Caco-2 (cell line): ENCODE measurements at regions of chr7 and their contacts with region 1.

Region 1: DNA sequence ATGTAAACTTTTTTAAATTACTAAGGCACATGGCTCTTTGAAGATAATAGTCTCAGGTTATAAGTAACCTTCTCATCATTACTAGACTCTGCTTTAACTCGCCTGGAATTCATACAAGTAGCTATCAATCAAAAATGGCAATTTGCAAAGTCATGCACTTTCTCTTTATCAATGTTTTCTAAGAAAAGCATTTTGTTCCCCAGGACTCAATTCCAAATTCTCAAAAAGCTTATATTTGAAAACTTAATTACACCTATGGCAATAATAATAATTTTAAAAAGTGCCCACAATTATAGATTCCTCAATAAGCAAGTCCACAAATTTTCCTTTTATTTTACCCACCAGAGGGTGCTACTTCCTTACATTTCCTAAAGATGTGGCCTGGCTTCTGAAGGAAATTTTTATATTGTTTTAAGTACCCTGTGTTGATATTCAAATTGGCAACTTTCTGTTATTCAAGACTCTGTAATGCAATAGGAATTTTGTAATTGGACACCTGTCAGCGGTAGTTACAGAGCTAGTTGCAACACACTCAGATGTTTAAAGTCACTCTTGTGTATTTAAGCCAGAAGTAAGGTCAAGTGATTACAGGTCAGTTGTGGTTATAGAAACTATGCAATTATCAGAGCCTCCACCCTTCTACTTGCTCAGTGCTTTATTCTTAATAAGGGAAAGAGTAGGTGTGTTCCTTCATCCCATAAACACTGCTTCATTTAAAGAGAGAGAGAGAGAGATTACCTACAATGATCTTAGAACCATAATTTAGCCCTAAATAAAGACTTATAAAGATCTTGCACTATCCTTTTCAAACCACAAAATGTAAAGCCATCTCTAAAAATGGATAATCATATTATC is 47.1 kb upstream of the HYAL4 start:
- DNase-seq: peak; percentile 44 to 60
- H3K4me3 ChIP-seq: no peak overlapping the region
- H3K4me3 Mint-ChIP-seq: peak overlapping the region; percentile 23
- H3K27ac Mint-ChIP-seq: peak overlapping the region; percentile 18
- H3K4me1 ChIP-seq: peaks cover 36% of the 10 kb centered on the region
- H3K4me1 Mint-ChIP-seq: peaks cover 37% of the 10 kb centered on the region
- H3K27me3 ChIP-seq: no peaks in the 10 kb centered on the region
- H3K27me3 Mint-ChIP-seq: no peaks in the 10 kb centered on the region
- CTCF ChIP-seq: peak in 1 of 2 experiments; percentile 49

Region 2: DNA sequence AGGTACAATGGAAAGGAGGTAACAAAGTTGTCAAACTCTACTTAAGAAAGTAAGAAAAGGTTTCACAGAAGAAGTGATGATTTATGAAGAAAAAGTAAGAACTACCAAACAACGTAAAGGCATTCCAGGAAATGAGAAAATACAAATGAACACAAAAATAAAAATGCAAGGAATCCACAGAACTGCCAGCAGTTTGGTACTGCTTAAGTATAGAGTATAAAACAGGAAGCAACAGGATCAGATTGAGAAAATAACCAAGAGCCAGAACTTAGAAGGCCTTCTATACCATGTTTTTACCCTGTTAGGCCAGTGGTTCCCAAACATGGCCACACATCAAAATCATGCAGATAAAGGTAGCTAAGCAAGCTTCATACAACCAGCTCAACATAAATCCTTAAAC is 249.5 kb before region 1 on chr7:
- CTCF ChIA-PET with region 1: no interaction called
- POLR2A ChIA-PET with region 1: no interaction called
- intact Hi-C with region 1: no loop called
- DNase-seq: no peak
- H3K4me3 ChIP-seq: no peak overlapping the region
- H3K4me3 Mint-ChIP-seq: no peak overlapping the region
- H3K27ac Mint-ChIP-seq: no peak overlapping the region
- H3K4me1 ChIP-seq: no peaks in the 10 kb centered on the region
- H3K4me1 Mint-ChIP-seq: no peaks in the 10 kb centered on the region
- H3K27me3 ChIP-seq: no peaks in the 10 kb centered on the region
- H3K27me3 Mint-ChIP-seq: no peaks in the 10 kb centered on the region
- CTCF ChIP-seq: no peak

Region 3: GRCh38 chr7:123580406-123581161 is 217.3 kb before region 1 on chr7:
- CTCF ChIA-PET with region 1: no interaction called
- POLR2A ChIA-PET with region 1: no interaction called
- intact Hi-C with region 1: loop called (anchors 1 kb)
- DNase-seq: peak; percentile 52 to 64
- H3K4me3 ChIP-seq: no peak overlapping the region
- H3K4me3 Mint-ChIP-seq: peak overlapping the region; percentile 58
- H3K27ac Mint-ChIP-seq: no peak overlapping the region
- H3K4me1 ChIP-seq: no peaks in the 10 kb centered on the region
- H3K4me1 Mint-ChIP-seq: peaks cover 5% of the 10 kb centered on the region
- H3K27me3 ChIP-seq: no peaks in the 10 kb centered on the region
- H3K27me3 Mint-ChIP-seq: peaks cover 4% of the 10 kb centered on the region
- CTCF ChIP-seq: peak; percentile 88 to 92

Region 4: DNA sequence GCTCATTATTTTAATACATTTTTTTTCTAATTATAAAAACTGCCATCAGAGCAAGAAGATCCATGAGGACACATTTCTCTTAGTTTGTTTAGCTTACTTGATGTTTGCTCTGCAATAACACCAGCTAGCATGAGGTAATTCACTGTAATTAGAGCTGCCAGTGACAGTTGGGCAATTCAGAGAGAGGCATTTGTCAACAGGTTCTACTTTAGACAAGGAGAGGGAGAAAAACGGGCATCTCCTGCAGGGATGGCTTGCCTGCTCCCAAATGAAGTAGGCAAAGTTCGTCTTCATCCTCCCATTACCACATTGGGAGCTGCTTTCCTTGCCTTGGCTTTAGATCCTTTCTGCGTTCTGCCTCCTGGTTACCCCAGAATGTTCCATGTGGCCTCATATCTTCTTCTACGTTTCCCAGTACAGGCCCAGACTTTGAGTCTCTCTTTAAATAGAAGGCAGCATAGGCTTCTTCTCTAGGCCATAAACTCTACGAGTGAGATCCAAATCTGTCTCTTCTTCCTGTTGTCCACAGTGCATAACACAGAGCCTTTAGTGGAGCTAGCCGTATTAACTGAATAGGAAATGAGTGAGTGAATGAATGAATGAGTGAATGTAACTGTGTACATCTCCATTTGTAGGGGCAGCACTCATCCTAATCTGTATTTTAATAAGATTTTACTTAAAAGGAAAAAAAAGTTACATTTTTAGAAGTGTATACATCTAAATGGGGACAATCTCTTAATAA is 175.1 kb before region 1 on chr7:
- CTCF ChIA-PET with region 1: no interaction called
- POLR2A ChIA-PET with region 1: no interaction called
- intact Hi-C with region 1: loop called (anchors 1 kb)
- DNase-seq: peak in 1 of 2 experiments; percentile 67
- H3K4me3 ChIP-seq: no peak overlapping the region
- H3K4me3 Mint-ChIP-seq: no peak overlapping the region
- H3K27ac Mint-ChIP-seq: no peak overlapping the region
- H3K4me1 ChIP-seq: peaks cover 19% of the 10 kb centered on the region
- H3K4me1 Mint-ChIP-seq: peaks cover 28% of the 10 kb centered on the region
- H3K27me3 ChIP-seq: no peaks in the 10 kb centered on the region
- H3K27me3 Mint-ChIP-seq: no peaks in the 10 kb centered on the region
- CTCF ChIP-seq: no peak

Region 5: DNA sequence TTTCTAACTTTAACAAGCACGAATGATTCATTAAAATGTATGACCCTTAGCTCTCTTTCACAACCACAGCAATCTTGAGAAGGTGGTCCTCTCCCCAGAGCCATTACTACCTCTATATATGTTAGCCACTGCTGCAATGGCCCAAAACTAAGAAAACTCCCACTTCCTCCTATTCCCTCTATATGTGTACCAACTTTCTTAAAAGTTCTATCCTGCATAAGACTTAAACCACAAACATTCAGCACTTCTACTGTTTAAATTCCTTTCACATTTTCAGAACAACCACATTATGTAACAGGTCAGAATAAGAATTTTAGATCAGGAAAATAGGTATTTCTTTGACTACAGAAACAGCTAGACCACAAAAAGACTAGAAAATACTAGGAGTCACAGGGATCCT is 85.3 kb before region 1 on chr7:
- CTCF ChIA-PET with region 1: no interaction called
- POLR2A ChIA-PET with region 1: no interaction called
- intact Hi-C with region 1: loop called (anchors 5 kb)
- DNase-seq: no peak
- H3K4me3 ChIP-seq: no peak overlapping the region
- H3K4me3 Mint-ChIP-seq: no peak overlapping the region
- H3K27ac Mint-ChIP-seq: no peak overlapping the region
- H3K4me1 ChIP-seq: peaks cover 23% of the 10 kb centered on the region
- H3K4me1 Mint-ChIP-seq: peaks cover 22% of the 10 kb centered on the region
- H3K27me3 ChIP-seq: no peaks in the 10 kb centered on the region
- H3K27me3 Mint-ChIP-seq: no peaks in the 10 kb centered on the region
- CTCF ChIP-seq: no peak

Region 6: DNA sequence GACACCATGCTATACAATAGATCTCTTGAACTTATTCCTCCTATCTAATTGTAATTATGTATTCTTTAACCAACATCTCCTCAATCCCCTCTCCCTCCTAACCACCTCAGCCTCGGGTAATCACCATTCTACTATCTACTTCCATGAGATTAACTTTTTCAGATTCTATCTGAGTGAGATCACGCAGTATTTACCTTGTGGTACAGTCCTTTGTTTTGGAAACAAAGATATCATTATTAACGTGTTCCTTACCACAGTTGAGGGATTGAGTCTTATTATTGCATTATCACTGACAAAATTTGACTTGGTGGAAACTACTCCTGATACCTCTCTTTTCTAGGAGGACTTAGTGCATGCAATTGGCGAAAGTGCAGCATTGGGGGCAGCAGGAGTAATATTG is 21.1 kb after region 1 on chr7:
- CTCF ChIA-PET with region 1: no interaction called
- POLR2A ChIA-PET with region 1: no interaction called
- intact Hi-C with region 1: loop called (anchors 1 kb)
- DNase-seq: no peak
- H3K4me3 ChIP-seq: no peak overlapping the region
- H3K4me3 Mint-ChIP-seq: no peak overlapping the region
- H3K27ac Mint-ChIP-seq: no peak overlapping the region
- H3K4me1 ChIP-seq: peaks cover 15% of the 10 kb centered on the region
- H3K4me1 Mint-ChIP-seq: peaks cover 20% of the 10 kb centered on the region
- H3K27me3 ChIP-seq: no peaks in the 10 kb centered on the region
- H3K27me3 Mint-ChIP-seq: no peaks in the 10 kb centered on the region
- CTCF ChIP-seq: no peak

Region 7: DNA sequence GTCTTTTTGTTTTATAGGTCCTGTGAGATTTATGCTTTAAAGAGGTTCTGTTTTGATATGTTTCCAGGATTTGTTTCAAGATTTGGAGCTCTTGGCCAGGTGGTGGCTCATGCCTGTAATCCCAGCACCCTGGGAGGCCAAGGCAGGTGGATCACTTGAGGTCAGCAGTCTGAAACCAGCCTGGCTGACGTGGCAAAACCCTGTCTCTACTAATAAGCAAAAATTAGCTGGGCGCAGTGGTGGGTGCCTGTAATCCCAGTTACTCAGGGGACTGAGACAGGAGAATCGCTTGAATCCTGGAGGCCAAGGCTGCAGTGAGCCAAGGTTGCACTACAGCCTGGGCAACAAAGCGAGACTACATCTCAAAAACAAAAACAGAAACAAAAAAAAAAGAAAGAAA is 38.8 kb after region 1 on chr7:
- CTCF ChIA-PET with region 1: no interaction called
- POLR2A ChIA-PET with region 1: no interaction called
- intact Hi-C with region 1: no loop called
- DNase-seq: no peak
- H3K4me3 ChIP-seq: no peak overlapping the region
- H3K4me3 Mint-ChIP-seq: no peak overlapping the region
- H3K27ac Mint-ChIP-seq: no peak overlapping the region
- H3K4me1 ChIP-seq: no peaks in the 10 kb centered on the region
- H3K4me1 Mint-ChIP-seq: no peaks in the 10 kb centered on the region
- H3K27me3 ChIP-seq: no peaks in the 10 kb centered on the region
- H3K27me3 Mint-ChIP-seq: no peaks in the 10 kb centered on the region
- CTCF ChIP-seq: no peak

Region 8: DNA sequence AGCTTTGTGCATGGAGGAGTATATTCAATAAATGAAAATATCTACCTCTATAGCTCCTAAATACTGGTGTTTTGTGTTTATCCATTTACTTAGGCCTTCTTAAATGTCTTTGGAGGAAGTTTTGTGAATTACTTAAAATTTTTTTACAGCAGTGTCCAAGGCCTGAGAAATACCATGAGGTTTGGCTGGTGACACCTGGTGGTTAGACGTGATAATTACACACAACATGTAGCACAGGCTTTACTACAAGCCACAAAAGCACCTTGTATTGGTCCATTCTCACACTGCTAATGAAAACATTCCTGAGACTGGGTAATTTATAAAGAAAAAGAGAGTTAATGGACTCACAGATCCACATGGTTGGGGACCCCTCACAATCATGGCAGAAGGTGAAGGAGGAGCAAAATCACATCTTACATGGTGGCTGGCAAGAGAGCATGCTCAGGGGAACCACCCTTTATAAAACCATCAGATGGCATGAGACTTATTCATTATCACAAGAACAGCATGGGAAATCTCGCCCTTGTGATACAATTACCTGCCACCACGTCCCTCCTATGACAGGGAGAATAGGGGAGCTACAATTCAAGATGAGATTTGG is 67.7 kb after region 1 on chr7:
- CTCF ChIA-PET with region 1: interaction called, 7 read pairs
- POLR2A ChIA-PET with region 1: no interaction called
- intact Hi-C with region 1: loop called (anchors 1 kb)
- DNase-seq: peak; percentile 57 to 72
- H3K4me3 ChIP-seq: no peak overlapping the region
- H3K4me3 Mint-ChIP-seq: no peak overlapping the region
- H3K27ac Mint-ChIP-seq: no peak overlapping the region
- H3K4me1 ChIP-seq: 0 out of 2 replicates have a peak, but pooled peaks cover 3% of the 10 kb centered on the region
- H3K4me1 Mint-ChIP-seq: peaks cover 8% of the 10 kb centered on the region
- H3K27me3 ChIP-seq: no peaks in the 10 kb centered on the region
- H3K27me3 Mint-ChIP-seq: no peaks in the 10 kb centered on the region
- CTCF ChIP-seq: peak; percentile 53 to 74

Region 9: GRCh38 chr7:123916240-123916724 is 118.4 kb after region 1 on chr7:
- CTCF ChIA-PET with region 1: no interaction called
- POLR2A ChIA-PET with region 1: no interaction called
- intact Hi-C with region 1: loop called (anchors 1 kb)
- DNase-seq: peak; percentile 55 to 72
- H3K4me3 ChIP-seq: no peak overlapping the region
- H3K4me3 Mint-ChIP-seq: peak overlapping the region; percentile 20
- H3K27ac Mint-ChIP-seq: peak overlapping the region; percentile 68
- H3K4me1 ChIP-seq: peaks cover 11% of the 10 kb centered on the region
- H3K4me1 Mint-ChIP-seq: peaks cover 14% of the 10 kb centered on the region
- H3K27me3 ChIP-seq: no peaks in the 10 kb centered on the region
- H3K27me3 Mint-ChIP-seq: no peaks in the 10 kb centered on the region
- CTCF ChIP-seq: peak; percentile 50 to 59